CD4-positive, alpha-beta T cell (primary cell): ENCODE measurements at regions of chr10 and their contacts with region 1.

Region 1: GRCh38 chr10:99620713-99621453 is 644 bp upstream of the SLC25A28 start:
- DNase-seq: peak; percentile 68 to 98 (median 83)
- ATAC-seq: peak; percentile 85
- H3K4me3 ChIP-seq: peak overlapping the region; percentile 82
- H3K4me3 Mint-ChIP-seq: peak overlapping the region; percentile 91
- H3K27ac ChIP-seq: peak overlapping the region; percentile 93 to 96
- H3K27ac Mint-ChIP-seq: peak overlapping the region; percentile 91
- H3K4me1 ChIP-seq: peaks cover 19% of the 10 kb centered on the region
- H3K4me1 Mint-ChIP-seq: peaks cover 52% of the 10 kb centered on the region
- H3K27me3 ChIP-seq: no peaks in the 10 kb centered on the region
- H3K27me3 Mint-ChIP-seq: no peaks in the 10 kb centered on the region
- CTCF ChIP-seq: no peak

Region 2: DNA sequence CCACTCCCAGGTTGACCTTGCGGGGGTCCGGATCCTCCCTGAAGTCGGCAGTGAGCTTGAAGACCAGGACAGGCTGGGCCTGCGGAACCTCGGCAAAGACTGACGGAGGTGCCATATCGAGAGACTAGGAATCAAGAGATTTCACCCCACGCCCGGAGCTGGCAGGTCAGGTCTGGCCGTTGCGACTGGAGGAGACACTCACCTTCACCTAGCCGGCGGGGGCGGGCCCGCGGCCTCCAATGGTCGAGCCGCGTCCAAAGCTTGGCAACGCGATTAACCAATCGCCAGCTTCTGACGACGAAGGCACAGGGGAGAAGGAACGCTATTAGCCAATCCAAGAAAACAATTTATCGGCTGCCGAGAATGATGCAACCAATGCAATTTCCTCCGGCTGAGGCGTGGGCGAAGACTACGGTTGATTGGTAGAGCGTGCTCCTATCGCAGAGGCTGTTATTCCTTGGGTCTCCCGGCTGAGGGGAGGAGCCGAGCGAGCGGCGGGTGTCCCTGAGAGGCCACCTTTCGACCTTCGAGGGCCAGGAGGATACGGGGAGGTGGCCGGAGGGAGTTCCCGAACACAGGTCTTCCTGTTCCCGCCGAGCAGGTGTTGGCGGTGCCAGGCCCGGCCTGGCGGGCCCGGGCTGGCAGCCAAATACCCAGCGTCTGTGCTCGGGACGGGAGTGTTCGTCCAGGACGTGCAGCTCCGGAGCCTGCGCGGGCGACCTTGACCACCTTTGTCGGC is 190.3 kb before region 1 on chr10 and contains the start of gene GOT1:
- CTCF ChIA-PET with region 1: interaction called, 3 read pairs
- POLR2A ChIA-PET with region 1: interaction called, 22 read pairs
- intact Hi-C with region 1: loop called (anchors 1 to 5 kb)
- DNase-seq: peak; percentile 79 to 98 (median 87)
- ATAC-seq: peak; percentile 93
- H3K4me3 ChIP-seq: peak within 1 kb of the TSS; percentile 93
- H3K4me3 Mint-ChIP-seq: peak within 1 kb of the TSS; percentile 91
- H3K27ac ChIP-seq: peak within 1 kb of the TSS; percentile 52 to 67
- H3K27ac Mint-ChIP-seq: peak within 1 kb of the TSS; percentile 95
- H3K4me1 ChIP-seq: peaks cover 17% of the 10 kb centered on the region
- H3K4me1 Mint-ChIP-seq: peaks cover 47% of the 10 kb centered on the region
- H3K27me3 ChIP-seq: no peaks in the 10 kb centered on the region
- H3K27me3 Mint-ChIP-seq: no peaks in the 10 kb centered on the region
- CTCF ChIP-seq: no peak
- total RNA-seq, gene GOT1: 3.5 to 5.7 TPM

Region 3: DNA sequence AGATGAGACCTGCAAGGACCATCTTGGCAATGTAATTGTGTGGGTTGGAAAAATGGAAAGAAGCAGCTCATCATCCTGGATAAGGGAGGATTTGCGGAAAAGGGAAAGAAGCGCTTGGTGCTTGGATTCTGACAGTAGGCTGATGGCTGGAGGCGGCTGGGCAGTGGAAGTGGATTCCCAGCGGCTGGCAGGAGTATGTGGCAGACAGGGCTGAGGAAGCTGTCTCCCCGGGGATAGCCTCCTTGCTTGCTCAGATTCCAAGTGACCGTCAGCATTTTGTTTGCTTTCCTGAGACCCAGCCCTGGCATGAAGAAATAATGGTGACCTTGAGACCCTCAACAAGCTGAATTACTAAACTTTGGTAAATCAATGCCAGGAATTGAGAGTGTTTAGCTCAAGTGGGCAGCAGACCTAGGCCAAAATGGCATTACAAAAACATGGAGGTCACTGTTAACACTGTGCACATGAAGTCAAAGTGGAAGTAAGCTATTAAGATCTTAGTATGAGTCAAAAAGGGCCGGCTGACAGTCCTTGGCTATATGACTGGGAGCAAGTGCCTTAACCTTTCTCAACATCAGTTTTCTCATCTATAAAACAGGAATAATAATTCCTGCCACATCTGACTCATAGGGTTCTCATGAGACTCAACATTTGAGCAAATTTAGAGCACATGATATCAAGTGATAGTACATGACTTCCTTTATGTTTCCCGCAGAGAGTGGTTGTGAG is 21.9 kb before region 1 on chr10:
- CTCF ChIA-PET with region 1: no interaction called
- POLR2A ChIA-PET with region 1: no interaction called
- intact Hi-C with region 1: no loop called
- DNase-seq: no peak
- ATAC-seq: no peak
- H3K4me3 ChIP-seq: no peak overlapping the region
- H3K4me3 Mint-ChIP-seq: no peak overlapping the region
- H3K27ac ChIP-seq: no peak overlapping the region
- H3K27ac Mint-ChIP-seq: no peak overlapping the region
- H3K4me1 ChIP-seq: no peaks in the 10 kb centered on the region
- H3K4me1 Mint-ChIP-seq: no peaks in the 10 kb centered on the region
- H3K27me3 ChIP-seq: no peaks in the 10 kb centered on the region
- H3K27me3 Mint-ChIP-seq: peaks cover 9% of the 10 kb centered on the region
- CTCF ChIP-seq: no peak

Region 4: GRCh38 chr10:99659031-99659867 is 38.4 kb after region 1 on chr10 and contains the start of gene ENTPD7:
- CTCF ChIA-PET with region 1: interaction called, 3 read pairs
- POLR2A ChIA-PET with region 1: interaction called, 52 read pairs
- intact Hi-C with region 1: loop called in 1 of 2 experiments (anchors 1 kb)
- DNase-seq: peak; percentile 71 to 94 (median 84)
- ATAC-seq: peak; percentile 98
- H3K4me3 ChIP-seq: peak within 1 kb of the TSS; percentile 85
- H3K4me3 Mint-ChIP-seq: peak within 1 kb of the TSS; percentile 87
- H3K27ac ChIP-seq: peak within 1 kb of the TSS in 1 of 2 donors; percentile 7
- H3K27ac Mint-ChIP-seq: peak within 1 kb of the TSS; percentile 46
- H3K4me1 ChIP-seq: peaks cover 16% of the 10 kb centered on the region
- H3K4me1 Mint-ChIP-seq: peaks cover 28% of the 10 kb centered on the region
- H3K27me3 ChIP-seq: no peaks in the 10 kb centered on the region
- H3K27me3 Mint-ChIP-seq: peaks cover 11% of the 10 kb centered on the region
- CTCF ChIP-seq: peak; percentile 29
- total RNA-seq, gene ENTPD7: 1.1 to 1.4 TPM

Region 5: GRCh38 chr10:99695761-99696160 is 74.9 kb after region 1 on chr10:
- CTCF ChIA-PET with region 1: no interaction called
- POLR2A ChIA-PET with region 1: no interaction called
- intact Hi-C with region 1: no loop called
- DNase-seq: no peak
- ATAC-seq: no peak
- H3K4me3 ChIP-seq: no peak overlapping the region
- H3K4me3 Mint-ChIP-seq: no peak overlapping the region
- H3K27ac ChIP-seq: no peak overlapping the region
- H3K27ac Mint-ChIP-seq: no peak overlapping the region
- H3K4me1 ChIP-seq: no peaks in the 10 kb centered on the region
- H3K4me1 Mint-ChIP-seq: no peaks in the 10 kb centered on the region
- H3K27me3 ChIP-seq: no peaks in the 10 kb centered on the region
- H3K27me3 Mint-ChIP-seq: no peaks in the 10 kb centered on the region
- CTCF ChIP-seq: no peak

Region 6: DNA sequence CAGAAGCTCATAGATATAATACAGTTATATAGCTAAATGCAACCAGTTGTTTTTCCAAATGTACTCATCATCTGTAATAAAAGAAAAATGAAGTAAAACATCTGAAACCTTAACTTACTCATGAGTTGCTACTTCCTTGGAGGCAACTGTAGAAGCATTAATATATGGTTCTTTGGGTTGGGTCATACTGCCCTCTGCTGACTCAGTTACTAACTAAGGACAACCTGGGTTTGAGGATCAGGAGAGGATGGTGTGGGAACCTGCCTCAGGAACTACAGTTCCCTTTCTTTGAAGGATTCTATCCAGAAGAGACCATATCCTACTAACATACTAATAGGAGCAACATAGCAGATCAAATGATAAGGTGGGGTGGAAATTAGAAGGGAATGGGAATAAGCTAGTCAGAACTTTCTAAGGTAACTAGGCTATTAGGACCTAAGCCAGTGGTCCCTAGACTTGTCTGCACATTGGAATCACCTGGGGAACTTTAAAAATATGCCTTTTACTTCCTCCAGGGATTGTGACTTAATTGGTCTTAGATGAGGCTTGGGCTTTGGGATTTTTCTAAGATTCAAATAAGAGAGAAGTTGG is 90.3 kb after region 1 on chr10:
- CTCF ChIA-PET with region 1: no interaction called
- POLR2A ChIA-PET with region 1: no interaction called
- intact Hi-C with region 1: loop called in 1 of 2 experiments (anchors 5 kb)
- DNase-seq: peak in 4 of 14 experiments; percentile 40 to 67 (median 55)
- ATAC-seq: peak; percentile 69
- H3K4me3 ChIP-seq: no peak overlapping the region
- H3K4me3 Mint-ChIP-seq: no peak overlapping the region
- H3K27ac ChIP-seq: no peak overlapping the region
- H3K27ac Mint-ChIP-seq: no peak overlapping the region
- H3K4me1 ChIP-seq: no peaks in the 10 kb centered on the region
- H3K4me1 Mint-ChIP-seq: no peaks in the 10 kb centered on the region
- H3K27me3 ChIP-seq: no peaks in the 10 kb centered on the region
- H3K27me3 Mint-ChIP-seq: no peaks in the 10 kb centered on the region
- CTCF ChIP-seq: peak; percentile 59

Region 7: GRCh38 chr10:99859585-99859984 is 238.7 kb after region 1 on chr10:
- CTCF ChIA-PET with region 1: no interaction called
- POLR2A ChIA-PET with region 1: no interaction called
- intact Hi-C with region 1: no loop called
- DNase-seq: peak in 2 of 14 experiments; percentile 14 to 23
- ATAC-seq: no peak
- H3K4me3 ChIP-seq: no peak overlapping the region
- H3K4me3 Mint-ChIP-seq: no peak overlapping the region
- H3K27ac ChIP-seq: no peak overlapping the region
- H3K27ac Mint-ChIP-seq: no peak overlapping the region
- H3K4me1 ChIP-seq: no peaks in the 10 kb centered on the region
- H3K4me1 Mint-ChIP-seq: no peaks in the 10 kb centered on the region
- H3K27me3 ChIP-seq: peaks cover 0 to 4% of the 10 kb centered on the region in 2 experiments
- H3K27me3 Mint-ChIP-seq: peaks cover 41% of the 10 kb centered on the region
- CTCF ChIP-seq: no peak

Region 8: GRCh38 chr10:100185364-100186252 is 564.7 kb after region 1 on chr10 and contains the start of gene ERLIN1:
- CTCF ChIA-PET with region 1: no interaction called
- POLR2A ChIA-PET with region 1: no interaction called
- intact Hi-C with region 1: loop called in 1 of 2 experiments (anchors 5 kb)
- DNase-seq: peak; percentile 82 to 96 (median 90)
- ATAC-seq: peak; percentile 92
- H3K4me3 ChIP-seq: peak within 1 kb of the TSS; percentile 80
- H3K4me3 Mint-ChIP-seq: peak within 1 kb of the TSS; percentile 98
- H3K27ac ChIP-seq: peak within 1 kb of the TSS; percentile 72 to 81
- H3K27ac Mint-ChIP-seq: peak within 1 kb of the TSS; percentile 92
- H3K4me1 ChIP-seq: peaks cover 22% of the 10 kb centered on the region
- H3K4me1 Mint-ChIP-seq: peaks cover 73% of the 10 kb centered on the region
- H3K27me3 ChIP-seq: no peaks in the 10 kb centered on the region
- H3K27me3 Mint-ChIP-seq: no peaks in the 10 kb centered on the region
- CTCF ChIP-seq: no peak
- total RNA-seq, gene ERLIN1: 1.5 to 2.9 TPM